Gastrocnemius medialis (tissue), 4 donors: ENCODE measurements at regions of chr11 and their contacts with region 1.

Region 1: DNA sequence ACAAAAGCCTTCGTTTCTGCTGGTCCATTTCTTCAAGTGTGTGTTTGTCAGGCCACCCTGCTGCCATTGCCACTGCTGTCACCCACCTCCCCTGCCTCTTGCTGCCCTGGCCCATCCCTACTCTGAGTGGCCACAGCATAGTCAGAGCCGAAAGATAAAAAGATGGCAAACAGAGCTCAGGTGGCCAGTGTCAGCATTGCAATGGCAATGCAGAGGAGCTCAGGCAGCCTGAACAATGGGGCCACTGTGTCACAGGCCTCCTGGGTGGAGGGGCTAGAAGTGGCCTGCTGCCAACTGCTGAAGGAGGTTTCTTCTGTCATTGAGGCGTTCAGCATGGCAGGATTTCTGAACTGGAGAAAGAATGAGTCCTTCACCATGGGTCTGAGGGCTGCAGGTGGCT is 137.1 kb downstream of the CSNK2A3 start:
- DNase-seq: no peak
- ATAC-seq: no peak
- H3K4me3 ChIP-seq: no peak overlapping the region
- H3K27ac ChIP-seq: no peak overlapping the region
- H3K4me1 ChIP-seq: peaks cover 9 to 22% of the 10 kb centered on the region in 2 donors
- H3K27me3 ChIP-seq: no peaks in the 10 kb centered on the region
- CTCF ChIP-seq: no peak
- POLR2A ChIP-seq: no peak

Region 2: DNA sequence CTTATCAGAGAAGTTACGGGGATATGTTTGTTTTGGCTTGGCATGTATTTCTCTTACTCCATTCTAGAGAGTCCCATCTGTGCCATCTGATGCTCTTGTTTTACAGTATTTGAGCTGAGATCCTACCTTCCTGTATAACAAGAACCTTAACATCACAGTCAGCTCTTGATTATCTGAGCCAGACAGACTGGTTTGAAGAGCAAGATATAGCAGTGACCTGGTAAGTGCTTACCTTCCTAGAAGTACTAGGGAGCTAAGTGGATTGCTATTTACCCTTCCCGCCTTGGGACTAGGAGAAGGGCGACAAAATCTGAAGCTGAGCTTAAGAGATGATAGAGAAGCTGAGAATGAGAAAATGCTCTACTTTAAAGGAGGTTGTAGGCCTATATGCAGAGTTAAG is 98.2 kb before region 1 on chr11:
- in situ Hi-C with region 1: loop called in 1 of 4 experiments (anchors 25 kb)
- intact Hi-C with region 1: no loop called
- DNase-seq: no peak
- ATAC-seq: no peak
- H3K4me3 ChIP-seq: no peak overlapping the region
- H3K27ac ChIP-seq: no peak overlapping the region
- H3K4me1 ChIP-seq: no peaks in the 10 kb centered on the region
- H3K27me3 ChIP-seq: no peaks in the 10 kb centered on the region
- CTCF ChIP-seq: no peak
- POLR2A ChIP-seq: no peak

Region 3: DNA sequence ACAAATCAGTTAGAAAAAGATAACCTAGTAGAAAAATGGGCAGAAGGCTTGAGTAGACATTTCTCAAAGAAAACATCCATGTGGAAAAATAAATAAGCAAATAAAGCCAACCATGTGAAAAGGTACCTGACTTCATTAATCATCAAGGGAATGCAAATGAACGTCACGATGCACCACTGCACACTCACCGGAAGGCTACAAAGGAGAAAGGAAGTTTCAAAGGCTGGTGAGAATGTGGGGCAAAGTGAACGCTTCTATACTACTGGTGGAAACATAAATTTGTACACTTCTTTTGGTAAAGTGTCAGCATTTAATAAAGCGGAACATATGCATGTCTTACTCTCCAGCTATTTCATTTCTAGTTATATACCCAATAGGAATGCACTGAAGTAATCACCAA is 29.7 kb before region 1 on chr11:
- in situ Hi-C with region 1: no loop called
- intact Hi-C with region 1: loop called (anchors 1 kb)
- DNase-seq: no peak
- ATAC-seq: no peak
- H3K4me3 ChIP-seq: no peak overlapping the region
- H3K27ac ChIP-seq: no peak overlapping the region
- H3K4me1 ChIP-seq: peaks cover 0 to 5% of the 10 kb centered on the region in 2 donors
- H3K27me3 ChIP-seq: no peaks in the 10 kb centered on the region
- CTCF ChIP-seq: no peak
- POLR2A ChIP-seq: no peak

Region 4: DNA sequence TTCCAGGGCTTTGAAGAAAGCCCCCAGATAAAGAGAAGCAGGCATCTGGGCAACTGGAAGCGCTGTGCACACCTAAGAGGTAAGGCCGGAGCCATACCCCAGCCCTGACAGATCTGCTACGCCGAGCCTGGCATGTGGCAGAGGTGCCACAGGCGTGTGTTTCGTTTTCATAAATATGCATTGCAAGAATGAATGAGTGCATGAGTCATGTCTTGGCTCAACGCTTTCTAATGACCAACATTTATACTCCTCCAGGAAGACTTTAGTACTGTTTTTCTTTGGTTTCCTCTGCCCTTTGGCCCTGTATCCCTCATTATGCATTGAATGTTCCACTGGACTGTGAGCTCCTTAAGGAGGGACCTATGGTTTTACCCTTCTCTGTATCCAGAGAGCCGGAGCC is 175.9 kb after region 1 on chr11:
- in situ Hi-C with region 1: no loop called
- intact Hi-C with region 1: no loop called
- DNase-seq: no peak
- ATAC-seq: peak in 1 of 2 donors; percentile 46
- H3K4me3 ChIP-seq: no peak overlapping the region
- H3K27ac ChIP-seq: no peak overlapping the region
- H3K4me1 ChIP-seq: peaks cover 0 to 22% of the 10 kb centered on the region in 2 donors
- H3K27me3 ChIP-seq: no peaks in the 10 kb centered on the region
- CTCF ChIP-seq: no peak
- POLR2A ChIP-seq: no peak